ENCODE measurements at regions of chr12 and their contacts with region 1.

Region 1: GRCh38 chr12:89461649-89462612 is 62.7 kb downstream of the GALNT4 start:
- DNase-seq: peak; percentile 71
- H3K4me3 Mint-ChIP-seq: peak overlapping the region; percentile 20
- H3K27ac Mint-ChIP-seq: peak overlapping the region; percentile 9
- H3K4me1 Mint-ChIP-seq: peaks cover 8% of the 10 kb centered on the region
- H3K27me3 Mint-ChIP-seq: no peaks in the 10 kb centered on the region
- CTCF ChIP-seq: peak; percentile 48

Region 2: GRCh38 chr12:89040146-89040964 is 421.6 kb before region 1 on chr12:
- CTCF ChIA-PET with region 1: interaction called, 10 read pairs
- POLR2A ChIA-PET with region 1: no interaction called
- intact Hi-C with region 1: no loop called
- DNase-seq: no peak
- H3K4me3 Mint-ChIP-seq: no peak overlapping the region
- H3K27ac Mint-ChIP-seq: no peak overlapping the region
- H3K4me1 Mint-ChIP-seq: no peaks in the 10 kb centered on the region
- H3K27me3 Mint-ChIP-seq: no peaks in the 10 kb centered on the region
- CTCF ChIP-seq: no peak

Region 3: GRCh38 chr12:89162704-89163261 is 299.1 kb before region 1 on chr12:
- CTCF ChIA-PET with region 1: interaction called, 3 read pairs
- POLR2A ChIA-PET with region 1: no interaction called
- intact Hi-C with region 1: loop called (anchors 5 kb)
- DNase-seq: peak; percentile 99
- H3K4me3 Mint-ChIP-seq: no peak overlapping the region
- H3K27ac Mint-ChIP-seq: no peak overlapping the region
- H3K4me1 Mint-ChIP-seq: peaks cover 17% of the 10 kb centered on the region
- H3K27me3 Mint-ChIP-seq: no peaks in the 10 kb centered on the region
- CTCF ChIP-seq: no peak

Region 4: DNA sequence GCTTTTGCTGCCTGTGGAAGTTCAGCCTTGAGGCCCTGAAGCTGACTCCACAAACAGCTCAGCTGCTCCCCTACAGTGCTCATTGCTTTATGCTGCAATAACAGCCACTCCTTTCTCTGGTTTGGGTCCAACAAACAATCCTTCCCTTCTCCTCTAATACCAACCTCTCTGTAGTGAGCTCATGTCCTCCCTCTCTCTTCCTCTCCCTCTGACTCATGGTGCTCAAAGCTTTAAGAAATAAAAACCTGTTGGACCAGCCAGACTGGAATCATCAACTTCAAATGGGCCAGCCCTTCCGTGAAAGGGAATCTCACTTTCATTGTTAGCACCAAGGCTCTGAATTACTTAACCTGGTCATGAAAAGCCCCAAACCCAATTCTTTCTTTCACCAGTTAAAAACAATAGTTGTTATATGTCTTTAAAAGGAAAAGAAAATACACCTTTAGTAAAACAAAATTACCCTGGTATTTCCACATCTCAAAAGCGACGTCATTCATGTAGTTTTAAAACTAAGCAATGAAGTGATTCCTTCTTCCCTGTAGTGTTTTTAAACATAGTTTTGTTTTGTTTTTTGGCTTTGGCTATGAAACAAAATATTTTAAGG is 236.0 kb before region 1 on chr12:
- CTCF ChIA-PET with region 1: interaction called, 3 read pairs
- POLR2A ChIA-PET with region 1: no interaction called
- intact Hi-C with region 1: loop called (anchors 1 kb)
- DNase-seq: peak; percentile 96
- H3K4me3 Mint-ChIP-seq: peak overlapping the region; percentile 48
- H3K27ac Mint-ChIP-seq: peak overlapping the region; percentile 93
- H3K4me1 Mint-ChIP-seq: peaks cover 30% of the 10 kb centered on the region
- H3K27me3 Mint-ChIP-seq: no peaks in the 10 kb centered on the region
- CTCF ChIP-seq: no peak

Region 5: DNA sequence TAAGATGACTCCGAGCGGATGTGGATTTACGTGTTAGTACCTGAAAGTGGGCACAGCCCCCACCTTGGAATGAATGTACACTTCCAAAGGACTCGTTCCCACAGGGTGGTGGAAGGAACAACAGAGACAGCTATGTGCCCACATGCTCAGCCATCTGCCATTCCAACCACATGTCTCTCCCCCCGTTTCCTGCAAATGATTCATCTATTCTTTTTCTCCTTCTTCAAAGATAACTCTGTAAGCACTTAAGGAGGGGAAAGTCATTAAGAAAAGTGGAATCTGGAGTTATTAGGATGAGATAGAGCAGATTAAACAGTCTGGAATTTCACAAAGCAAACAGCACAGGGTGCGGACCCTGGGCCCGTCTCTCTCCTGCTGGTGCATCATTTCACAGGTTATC is 91.1 kb before region 1 on chr12:
- CTCF ChIA-PET with region 1: no interaction called
- POLR2A ChIA-PET with region 1: no interaction called
- intact Hi-C with region 1: no loop called
- DNase-seq: peak; percentile 91
- H3K4me3 Mint-ChIP-seq: peak overlapping the region; percentile 26
- H3K27ac Mint-ChIP-seq: peak overlapping the region; percentile 75
- H3K4me1 Mint-ChIP-seq: peaks cover 56% of the 10 kb centered on the region
- H3K27me3 Mint-ChIP-seq: no peaks in the 10 kb centered on the region
- CTCF ChIP-seq: no peak

Region 6: GRCh38 chr12:89451841-89452251 is 10.1 kb before region 1 on chr12:
- CTCF ChIA-PET with region 1: interaction called, 15 read pairs
- POLR2A ChIA-PET with region 1: interaction called, 4 read pairs
- intact Hi-C with region 1: no loop called
- DNase-seq: peak; percentile 21
- H3K4me3 Mint-ChIP-seq: peak overlapping the region; percentile 44
- H3K27ac Mint-ChIP-seq: peak overlapping the region; percentile 16
- H3K4me1 Mint-ChIP-seq: peaks cover 10% of the 10 kb centered on the region
- H3K27me3 Mint-ChIP-seq: no peaks in the 10 kb centered on the region
- CTCF ChIP-seq: no peak